IMR-90 (cell line): ENCODE measurements at regions of chr9 and their contacts with region 1.

Region 1: GRCh38 chr9:94922098-94922607 is 195.7 kb downstream of the AOPEP start:
- DNase-seq: peak; percentile 98
- ATAC-seq: peak; percentile 71
- H3K4me3 ChIP-seq: no peak overlapping the region
- H3K27ac ChIP-seq: peak overlapping the region; percentile 97
- H3K4me1 ChIP-seq: peaks cover 30% of the 10 kb centered on the region
- H3K27me3 ChIP-seq: no peaks in the 10 kb centered on the region
- CTCF ChIP-seq: no peak
- POLR2A ChIP-seq: no peak; the same call in 1 of the 2 replicates
- RAD21 ChIP-seq: peak; percentile 40

Region 2: GRCh38 chr9:94681508-94681907 is 240.6 kb before region 1 on chr9:
- CTCF ChIA-PET with region 1: interaction called, 3 read pairs
- POLR2A ChIA-PET with region 1: no interaction called
- dilution Hi-C with region 1: no loop called
- in situ Hi-C with region 1: no loop called
- intact Hi-C with region 1: loop called (anchors 5 kb)
- DNase-seq: peak; percentile 80
- ATAC-seq: peak; percentile 99
- H3K4me3 ChIP-seq: no peak overlapping the region
- H3K27ac ChIP-seq: no peak overlapping the region
- H3K4me1 ChIP-seq: no peaks in the 10 kb centered on the region; the same call in 1 of the 2 replicates
- H3K27me3 ChIP-seq: no peaks in the 10 kb centered on the region; the same call in 1 of the 2 replicates
- CTCF ChIP-seq: peak; percentile 85
- POLR2A ChIP-seq: no peak
- RAD21 ChIP-seq: peak; percentile 92

Region 3: GRCh38 chr9:94867281-94867841 is 54.8 kb before region 1 on chr9:
- CTCF ChIA-PET with region 1: no interaction called
- POLR2A ChIA-PET with region 1: interaction called, 4 read pairs
- dilution Hi-C with region 1: no loop called
- in situ Hi-C with region 1: no loop called
- intact Hi-C with region 1: loop called (anchors 2 kb)
- DNase-seq: peak; percentile 91
- ATAC-seq: peak; percentile 49
- H3K4me3 ChIP-seq: no peak overlapping the region
- H3K27ac ChIP-seq: peak overlapping the region; percentile 59
- H3K4me1 ChIP-seq: peaks cover 19% of the 10 kb centered on the region
- H3K27me3 ChIP-seq: no peaks in the 10 kb centered on the region
- CTCF ChIP-seq: no peak
- POLR2A ChIP-seq: peak; percentile 25; the same call in 1 of the 2 replicates
- RAD21 ChIP-seq: peak; percentile 19

Region 4: DNA sequence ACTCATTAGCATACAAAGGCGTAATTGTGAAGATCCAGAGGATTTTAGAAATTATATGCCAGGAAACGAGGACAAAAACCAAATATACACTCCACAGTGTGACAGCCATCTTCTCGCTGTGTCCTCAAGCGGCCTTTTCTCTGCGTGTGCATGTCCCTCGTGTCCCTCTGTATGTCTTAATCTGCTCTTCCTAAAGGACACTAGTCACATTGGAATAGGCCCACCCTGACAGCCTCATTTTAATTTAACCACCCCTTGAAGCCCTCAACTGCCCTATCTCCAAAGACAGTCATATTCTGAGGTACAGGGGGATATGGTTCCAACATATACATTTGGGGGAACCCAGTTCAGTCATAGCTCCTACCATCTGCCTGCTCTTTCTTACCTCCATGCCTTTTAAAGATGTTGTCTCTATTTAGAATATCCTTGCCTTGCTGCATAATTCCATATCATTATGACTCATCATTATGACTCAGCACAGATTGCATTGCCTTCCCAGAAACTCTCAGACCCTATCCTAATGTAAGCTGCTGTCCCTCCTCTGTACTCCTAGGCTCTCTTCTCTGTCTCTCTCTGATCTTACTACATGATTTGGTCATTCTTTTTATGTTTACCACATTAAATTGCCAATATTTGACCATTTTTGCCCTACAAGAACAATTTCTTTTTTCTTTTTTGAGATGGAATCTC is 15.2 kb after region 1 on chr9:
- CTCF ChIA-PET with region 1: no interaction called
- POLR2A ChIA-PET with region 1: no interaction called
- dilution Hi-C with region 1: no loop called
- in situ Hi-C with region 1: no loop called
- intact Hi-C with region 1: loop called (anchors 2 kb)
- DNase-seq: peak; percentile 98
- ATAC-seq: peak; percentile 86
- H3K4me3 ChIP-seq: no peak overlapping the region
- H3K27ac ChIP-seq: peak overlapping the region; percentile 89
- H3K4me1 ChIP-seq: peaks cover 33% of the 10 kb centered on the region
- H3K27me3 ChIP-seq: no peaks in the 10 kb centered on the region
- CTCF ChIP-seq: no peak
- POLR2A ChIP-seq: no peak
- RAD21 ChIP-seq: peak; percentile 27

Region 5: DNA sequence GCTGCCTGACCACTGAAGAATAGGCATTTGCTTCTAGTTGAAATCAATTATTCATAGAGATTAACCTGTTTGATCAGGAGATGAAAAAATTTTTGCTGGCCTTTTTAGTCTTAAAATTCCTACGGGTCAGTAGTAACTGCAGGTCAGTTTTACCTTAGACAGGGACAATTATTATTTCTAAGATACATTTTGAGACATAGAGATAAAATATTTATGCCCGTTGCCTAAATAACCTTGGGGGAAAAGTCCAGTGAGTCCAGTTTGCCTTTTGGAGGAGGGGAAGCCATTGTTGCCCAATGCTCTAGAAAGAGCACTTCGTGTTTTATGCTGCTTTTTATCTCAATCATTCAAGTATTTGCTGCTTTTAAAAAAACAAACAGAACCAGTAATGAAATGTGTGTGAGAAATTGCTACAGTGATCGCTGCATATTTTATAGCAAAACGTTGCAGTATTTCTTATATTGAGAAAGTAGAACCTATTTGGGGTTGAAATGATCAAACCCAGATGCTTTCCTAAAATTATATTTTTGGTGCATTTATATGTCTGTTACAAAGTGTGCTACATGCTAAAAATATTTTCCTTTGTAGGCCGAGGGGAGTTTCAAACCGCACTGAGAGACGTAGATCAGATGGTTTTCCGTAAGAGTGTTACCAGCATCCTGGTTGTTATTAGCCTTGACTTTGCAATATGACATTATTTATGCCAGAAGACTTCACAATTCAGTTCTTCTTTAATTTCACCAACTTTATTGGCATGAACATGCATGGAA is 71.1 kb after region 1 on chr9:
- CTCF ChIA-PET with region 1: interaction called, 3 read pairs
- POLR2A ChIA-PET with region 1: no interaction called
- dilution Hi-C with region 1: no loop called
- in situ Hi-C with region 1: no loop called
- intact Hi-C with region 1: loop called (anchors 1 kb)
- DNase-seq: no peak
- ATAC-seq: no peak
- H3K4me3 ChIP-seq: no peak overlapping the region
- H3K27ac ChIP-seq: no peak overlapping the region
- H3K4me1 ChIP-seq: peaks cover 14% of the 10 kb centered on the region
- H3K27me3 ChIP-seq: no peaks in the 10 kb centered on the region
- CTCF ChIP-seq: no peak
- POLR2A ChIP-seq: no peak
- RAD21 ChIP-seq: no peak

Region 6: GRCh38 chr9:95055851-95056551 is 133.8 kb after region 1 on chr9:
- CTCF ChIA-PET with region 1: no interaction called
- POLR2A ChIA-PET with region 1: no interaction called
- dilution Hi-C with region 1: no loop called
- in situ Hi-C with region 1: no loop called
- intact Hi-C with region 1: loop called (anchors 5 kb)
- DNase-seq: peak; percentile 77
- ATAC-seq: peak; percentile 53
- H3K4me3 ChIP-seq: peak overlapping the region; percentile 12; the same call in 1 of the 2 replicates
- H3K27ac ChIP-seq: peak overlapping the region; percentile 99
- H3K4me1 ChIP-seq: peaks cover 34% of the 10 kb centered on the region
- H3K27me3 ChIP-seq: no peaks in the 10 kb centered on the region
- CTCF ChIP-seq: no peak
- POLR2A ChIP-seq: peak; percentile 70
- RAD21 ChIP-seq: peak; percentile 25; the same call in 1 of the 2 replicates